HEK293 (cell line): ENCODE measurements at regions of chr9 and their contacts with region 1.

Region 1: GRCh38 chr9:137223078-137223970 is 1.3 kb upstream of the RNF208 start:
- H3K4me3 ChIP-seq: peak overlapping the region; percentile 89
- H3K27ac ChIP-seq: peak overlapping the region; percentile 83
- H3K4me1 ChIP-seq: peaks cover 4% of the 10 kb centered on the region
- CTCF ChIP-seq: no peak

Region 2: GRCh38 chr9:137070201-137070905 is 153.0 kb before region 1 on chr9 and contains the start of gene SAPCD2:
- CTCF ChIA-PET with region 1: interaction called, 54 read pairs
- POLR2A ChIA-PET with region 1: interaction called, 4 read pairs
- H3K4me3 ChIP-seq: peak within 1 kb of the TSS; percentile 38
- H3K27ac ChIP-seq: peak within 1 kb of the TSS; percentile 71
- H3K4me1 ChIP-seq: peaks cover 10% of the 10 kb centered on the region; the same call in 1 of the 2 replicates
- CTCF ChIP-seq: no peak

Region 3: DNA sequence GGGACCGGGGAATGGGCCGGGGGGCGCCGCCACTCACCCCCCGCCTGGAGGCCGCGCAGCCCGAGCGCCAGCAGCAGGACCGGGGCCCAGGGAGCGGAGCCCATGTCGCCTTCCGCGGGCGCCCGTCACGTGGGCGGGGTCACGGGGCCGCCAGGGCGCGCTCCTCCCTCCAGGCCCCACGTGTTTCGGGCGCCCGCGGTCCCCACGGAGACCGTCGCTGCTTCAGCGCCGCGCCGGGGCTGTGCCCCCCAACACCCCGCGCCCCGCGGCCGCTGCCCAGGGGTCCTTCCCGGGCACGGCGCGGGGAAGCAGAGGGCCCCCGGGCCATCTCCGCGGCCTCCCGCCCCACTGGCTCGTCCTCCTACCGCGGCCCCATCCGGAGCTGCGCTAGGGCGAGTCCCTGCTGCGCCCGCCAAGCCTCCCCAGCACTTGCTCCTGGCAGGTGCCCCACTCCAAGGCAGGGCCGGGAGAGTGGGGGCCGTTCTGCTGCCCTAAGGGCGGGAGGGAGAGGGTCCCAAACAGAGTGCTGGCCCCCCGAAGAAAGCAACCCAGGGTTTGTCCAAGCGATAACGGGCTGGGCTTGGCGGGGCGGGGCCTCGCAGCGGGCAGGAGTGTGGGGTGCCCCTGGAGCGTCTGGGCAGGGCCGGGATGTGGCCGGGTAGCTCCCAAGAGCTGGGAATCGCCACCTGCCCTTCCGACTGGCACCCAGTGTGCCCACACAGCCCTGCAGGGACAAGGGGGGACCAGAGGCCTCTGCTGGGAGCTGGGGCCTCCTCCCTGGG is 108.5 kb before region 1 on chr9 and contains the start of gene DPP7:
- CTCF ChIA-PET with region 1: interaction called, 69 read pairs
- POLR2A ChIA-PET with region 1: interaction called, 7 read pairs
- H3K4me3 ChIP-seq: peak within 1 kb of the TSS; percentile 4
- H3K27ac ChIP-seq: no peak within 1 kb of the TSS
- H3K4me1 ChIP-seq: no peaks in the 10 kb centered on the region
- CTCF ChIP-seq: no peak

Region 4: GRCh38 chr9:137188490-137189296 is 34.6 kb before region 1 on chr9 and contains the starts of genes ANAPC2 and SSNA1:
- CTCF ChIA-PET with region 1: interaction called, 13 read pairs
- POLR2A ChIA-PET with region 1: interaction called, 41 read pairs
- H3K4me3 ChIP-seq: peak within 1 kb of the TSS; percentile 92
- H3K27ac ChIP-seq: peak within 1 kb of the TSS; percentile 92
- H3K4me1 ChIP-seq: peaks cover 11% of the 10 kb centered on the region
- CTCF ChIP-seq: peak; percentile 100